OCI-LY7 (cell line): ENCODE measurements at regions of chr2 and their contacts with region 1.

Region 1: GRCh38 chr2:177489719-177490301 is 97.2 kb downstream of the AGPS start:
- DNase-seq: peak; percentile 31
- H3K4me3 ChIP-seq: no peak overlapping the region
- H3K27ac ChIP-seq: no peak overlapping the region
- H3K4me1 ChIP-seq: no peaks in the 10 kb centered on the region
- CTCF ChIP-seq: peak; percentile 87

Region 2: GRCh38 chr2:177296040-177296439 is 193.8 kb before region 1 on chr2:
- CTCF ChIA-PET with region 1: no interaction called
- POLR2A ChIA-PET with region 1: no interaction called
- intact Hi-C with region 1: no loop called
- DNase-seq: peak; percentile 47
- H3K4me3 ChIP-seq: no peak overlapping the region
- H3K27ac ChIP-seq: no peak overlapping the region
- H3K4me1 ChIP-seq: peaks cover 5% of the 10 kb centered on the region
- CTCF ChIP-seq: peak; percentile 80

Region 3: DNA sequence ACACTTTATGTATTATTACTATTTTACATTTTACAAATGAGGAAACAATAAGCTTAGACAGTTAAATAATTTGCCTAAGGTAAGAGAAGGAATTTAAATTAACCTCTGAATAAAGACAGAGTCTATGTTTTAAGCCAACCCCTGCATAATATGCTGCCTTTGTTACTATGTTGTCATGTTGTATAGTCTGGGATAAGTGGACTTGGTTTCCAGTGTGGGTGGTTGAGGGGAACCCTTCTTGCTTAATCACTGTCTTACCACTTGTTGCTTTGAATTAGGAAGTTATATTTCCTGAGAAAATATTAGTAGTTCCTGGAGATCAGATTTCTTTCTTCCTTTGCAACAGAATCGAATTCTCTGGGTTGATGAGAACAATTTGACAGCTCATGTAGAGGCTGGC is 44.6 kb before region 1 on chr2:
- CTCF ChIA-PET with region 1: no interaction called
- POLR2A ChIA-PET with region 1: no interaction called
- intact Hi-C with region 1: no loop called
- DNase-seq: no peak
- H3K4me3 ChIP-seq: no peak overlapping the region
- H3K27ac ChIP-seq: no peak overlapping the region
- H3K4me1 ChIP-seq: no peaks in the 10 kb centered on the region
- CTCF ChIP-seq: no peak

Region 4: DNA sequence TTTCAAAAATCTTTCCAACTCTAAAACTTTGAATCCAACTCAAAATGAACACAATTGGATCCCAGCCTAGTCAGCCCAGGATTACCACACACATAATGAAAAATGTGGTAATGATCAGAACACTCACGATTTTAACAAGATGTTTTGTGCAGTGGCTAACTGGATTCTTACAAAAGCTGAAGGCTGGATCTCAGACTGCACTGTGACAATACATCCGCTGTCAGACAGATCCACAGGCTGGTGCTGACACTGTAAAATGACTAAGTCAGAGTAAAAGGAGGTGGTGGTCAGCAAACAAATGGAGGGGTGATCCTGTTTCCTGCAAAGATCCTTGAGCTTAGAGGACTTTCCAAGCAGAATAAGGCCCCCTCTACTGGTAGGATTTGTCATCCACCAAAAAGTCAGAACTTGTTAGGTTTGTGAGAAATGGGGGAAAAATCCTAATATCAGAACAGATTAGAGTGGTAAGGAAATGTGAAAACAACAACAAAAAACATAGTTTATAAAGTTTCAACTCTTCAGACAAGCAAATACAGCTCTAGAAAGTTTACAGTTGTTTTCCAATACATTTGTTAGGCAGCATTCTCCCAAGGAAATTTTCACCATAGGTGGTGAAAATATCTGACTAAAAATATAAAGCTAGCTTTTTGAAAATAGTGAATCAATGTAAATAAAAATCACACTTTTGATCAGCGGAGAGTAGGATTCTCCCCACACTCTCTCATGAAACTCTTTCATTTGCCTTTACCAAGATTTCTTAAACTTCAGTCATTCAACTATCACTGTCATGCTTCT is 114.7 kb after region 1 on chr2:
- CTCF ChIA-PET with region 1: no interaction called
- POLR2A ChIA-PET with region 1: no interaction called
- intact Hi-C with region 1: loop called (anchors 2 kb)
- DNase-seq: peak; percentile 35
- H3K4me3 ChIP-seq: no peak overlapping the region
- H3K27ac ChIP-seq: no peak overlapping the region
- H3K4me1 ChIP-seq: no peaks in the 10 kb centered on the region
- CTCF ChIP-seq: peak; percentile 84

Region 5: DNA sequence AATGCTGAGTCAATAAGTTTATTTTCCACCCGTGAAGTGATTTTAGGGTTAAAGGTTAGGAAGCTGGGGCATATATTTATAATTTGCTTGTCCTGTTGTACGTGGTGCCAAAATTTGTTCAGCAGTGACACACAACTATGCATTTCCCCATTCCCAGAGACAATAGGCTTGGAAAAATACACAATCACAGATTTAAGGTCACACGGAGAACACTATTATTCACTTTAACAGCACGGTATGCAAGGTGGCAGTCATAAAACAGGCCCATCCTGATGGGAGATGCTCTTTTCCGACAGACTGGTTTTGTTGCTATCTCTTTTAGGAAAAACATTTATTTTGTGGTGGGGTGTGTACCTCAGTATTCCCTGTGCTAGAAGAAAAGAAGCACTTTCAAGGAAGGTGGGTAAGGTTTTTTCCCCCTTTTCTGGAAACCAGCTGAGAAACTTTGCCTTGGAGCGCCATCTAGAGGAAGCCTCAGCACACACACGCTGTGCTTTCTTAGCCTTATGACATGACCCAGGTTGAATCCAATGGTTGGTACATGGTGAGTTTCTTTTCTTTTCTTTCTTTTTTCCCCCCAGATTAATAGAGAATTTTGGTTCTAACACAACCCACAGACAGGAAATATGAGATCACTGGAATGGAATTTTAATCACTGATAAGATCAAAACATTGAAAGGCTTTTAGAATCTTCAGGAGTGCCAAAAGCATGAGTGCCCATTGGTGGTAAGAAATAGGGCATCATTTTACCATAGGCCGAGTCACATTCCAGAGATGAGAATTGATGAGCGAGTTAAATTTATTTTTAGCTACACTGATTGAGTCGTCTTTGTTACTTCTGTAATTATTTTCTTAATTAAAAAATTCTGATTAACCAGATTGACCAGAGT is 234.8 kb after region 1 on chr2:
- CTCF ChIA-PET with region 1: no interaction called
- POLR2A ChIA-PET with region 1: no interaction called
- intact Hi-C with region 1: loop called (anchors 1 kb)
- DNase-seq: peak; percentile 58
- H3K4me3 ChIP-seq: no peak overlapping the region
- H3K27ac ChIP-seq: no peak overlapping the region
- H3K4me1 ChIP-seq: no peaks in the 10 kb centered on the region
- CTCF ChIP-seq: peak; percentile 97